ENCODE measurements at regions of chr12 and their contacts with region 1.

Region 1: GRCh38 chr12:16385782-16386646 is 38.6 kb downstream of the MGST1 start:
- DNase-seq: peak; percentile 50
- ATAC-seq: peak; percentile 75
- H3K4me3 ChIP-seq: no peak overlapping the region
- H3K27ac ChIP-seq: no peak overlapping the region
- H3K4me1 ChIP-seq: no peaks in the 10 kb centered on the region
- H3K27me3 ChIP-seq: no peaks in the 10 kb centered on the region
- CTCF ChIP-seq: peak; percentile 54

Region 2: GRCh38 chr12:16281157-16281556 is 104.9 kb before region 1 on chr12:
- CTCF ChIA-PET with region 1: no interaction called
- POLR2A ChIA-PET with region 1: no interaction called
- intact Hi-C with region 1: no loop called
- DNase-seq: peak; percentile 13
- ATAC-seq: no peak
- H3K4me3 ChIP-seq: no peak overlapping the region
- H3K27ac ChIP-seq: no peak overlapping the region
- H3K4me1 ChIP-seq: no peaks in the 10 kb centered on the region
- H3K27me3 ChIP-seq: no peaks in the 10 kb centered on the region
- CTCF ChIP-seq: no peak

Region 3: DNA sequence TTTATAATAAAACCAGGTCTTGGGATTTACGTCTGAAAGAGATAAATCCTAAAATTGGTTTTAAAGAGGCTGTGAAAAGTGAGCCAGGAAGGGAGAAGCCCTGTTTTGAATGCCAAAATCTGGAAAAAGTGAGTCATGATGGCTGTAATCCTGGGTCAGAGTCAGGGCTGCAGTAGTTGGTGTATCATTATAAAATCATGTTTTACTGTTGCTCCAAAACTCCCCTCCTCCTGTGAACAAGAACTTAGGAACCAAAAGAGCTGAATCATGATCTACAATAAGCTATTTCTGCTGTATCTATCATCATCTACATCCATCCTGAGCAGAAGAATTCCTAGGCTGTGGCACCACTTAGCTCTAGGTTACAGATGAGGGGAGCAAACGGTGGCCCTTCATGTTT is 140.7 kb after region 1 on chr12:
- CTCF ChIA-PET with region 1: no interaction called
- POLR2A ChIA-PET with region 1: no interaction called
- intact Hi-C with region 1: loop called (anchors 10 kb)
- DNase-seq: peak; percentile 69
- ATAC-seq: peak; percentile 76
- H3K4me3 ChIP-seq: no peak overlapping the region
- H3K27ac ChIP-seq: peak overlapping the region; percentile 37
- H3K4me1 ChIP-seq: peaks cover 28% of the 10 kb centered on the region
- H3K27me3 ChIP-seq: no peaks in the 10 kb centered on the region
- CTCF ChIP-seq: no peak

Region 4: DNA sequence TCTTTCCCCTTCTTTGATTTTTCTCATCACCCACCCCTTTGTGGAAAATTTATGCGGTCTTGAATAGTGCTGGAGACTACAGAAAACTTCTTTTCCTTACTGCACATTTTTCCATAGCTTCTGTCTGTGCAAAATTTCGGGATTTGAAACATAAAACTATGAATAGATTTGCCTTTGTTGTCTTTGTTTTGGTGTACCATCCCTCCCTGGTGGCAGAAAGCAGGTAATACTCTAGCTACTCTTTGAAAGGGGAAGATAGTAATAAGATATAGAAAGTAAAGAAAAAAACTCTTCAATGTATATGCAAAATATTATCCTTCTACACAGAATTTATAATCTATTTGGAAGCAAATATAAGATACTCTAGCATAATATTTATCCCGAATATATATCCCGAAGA is 299.1 kb after region 1 on chr12:
- CTCF ChIA-PET with region 1: interaction called, 9 read pairs
- POLR2A ChIA-PET with region 1: no interaction called
- intact Hi-C with region 1: loop called (anchors 2 kb)
- DNase-seq: peak; percentile 20
- ATAC-seq: no peak
- H3K4me3 ChIP-seq: no peak overlapping the region
- H3K27ac ChIP-seq: no peak overlapping the region
- H3K4me1 ChIP-seq: no peaks in the 10 kb centered on the region
- H3K27me3 ChIP-seq: no peaks in the 10 kb centered on the region
- CTCF ChIP-seq: peak; percentile 56; the same call in 1 of the 2 replicates

Region 5: GRCh38 chr12:17642340-17642650 is 1256.3 kb after region 1 on chr12:
- CTCF ChIA-PET with region 1: no interaction called
- POLR2A ChIA-PET with region 1: no interaction called
- intact Hi-C with region 1: loop called (anchors 5 kb)
- DNase-seq: no peak
- ATAC-seq: no peak
- H3K4me3 ChIP-seq: 0 out of 2 replicates have a peak overlapping the region, but pooled peaks have one; percentile 52
- H3K27ac ChIP-seq: no peak overlapping the region
- H3K4me1 ChIP-seq: no peaks in the 10 kb centered on the region
- H3K27me3 ChIP-seq: no peaks in the 10 kb centered on the region
- CTCF ChIP-seq: no peak; the same call in 1 of the 2 replicates